CD4-positive, alpha-beta memory T cell (primary cell): ENCODE measurements at regions of chr4 and their contacts with region 1.

Region 1: GRCh38 chr4:75514131-75514948 is at the starts of genes RCHY1 and THAP6:
- DNase-seq: peak; percentile 92 to 96 (median 94)
- H3K4me3 ChIP-seq: peak within 1 kb of the TSS; percentile 68 to 99
- H3K4me3 Mint-ChIP-seq: no peak within 1 kb of the TSS
- H3K27ac ChIP-seq: peak within 1 kb of the TSS; percentile 97
- H3K27ac Mint-ChIP-seq: peak within 1 kb of the TSS in 3 of 7 donors; percentile 99 to 100 (median 100)
- H3K4me1 ChIP-seq: peaks cover 74% of the 10 kb centered on the region
- H3K4me1 Mint-ChIP-seq: peaks cover 35 to 51% (median 38%) of the 10 kb centered on the region in 4 donors
- H3K27me3 ChIP-seq: no peaks in the 10 kb centered on the region
- H3K27me3 Mint-ChIP-seq: no peaks in the 10 kb centered on the region
- total RNA-seq, gene RCHY1: 36.6 to 40.9 TPM
- total RNA-seq, gene THAP6: 38.1 to 43.4 TPM

Region 2: GRCh38 chr4:75630174-75630936 is 116.0 kb after region 1 on chr4 and contains the start of gene CDKL2:
- CTCF ChIA-PET with region 1: no interaction called
- POLR2A ChIA-PET with region 1: interaction called, 3 read pairs
- intact Hi-C with region 1: loop called (anchors 10 kb)
- DNase-seq: peak; percentile 91 to 93 (median 92)
- H3K4me3 ChIP-seq: peak within 1 kb of the TSS; percentile 33 to 66
- H3K4me3 Mint-ChIP-seq: peak within 1 kb of the TSS; percentile 88 to 95 (median 92)
- H3K27ac ChIP-seq: peak within 1 kb of the TSS; percentile 29
- H3K27ac Mint-ChIP-seq: peak within 1 kb of the TSS; percentile 26 to 93 (median 89)
- H3K4me1 ChIP-seq: peaks cover 6% of the 10 kb centered on the region
- H3K4me1 Mint-ChIP-seq: peaks cover 4 to 23% (median 11%) of the 10 kb centered on the region in 4 donors
- H3K27me3 ChIP-seq: no peaks in the 10 kb centered on the region
- H3K27me3 Mint-ChIP-seq: no peaks in the 10 kb centered on the region
- total RNA-seq, gene CDKL2: 0.35 to 0.39 TPM

Region 3: DNA sequence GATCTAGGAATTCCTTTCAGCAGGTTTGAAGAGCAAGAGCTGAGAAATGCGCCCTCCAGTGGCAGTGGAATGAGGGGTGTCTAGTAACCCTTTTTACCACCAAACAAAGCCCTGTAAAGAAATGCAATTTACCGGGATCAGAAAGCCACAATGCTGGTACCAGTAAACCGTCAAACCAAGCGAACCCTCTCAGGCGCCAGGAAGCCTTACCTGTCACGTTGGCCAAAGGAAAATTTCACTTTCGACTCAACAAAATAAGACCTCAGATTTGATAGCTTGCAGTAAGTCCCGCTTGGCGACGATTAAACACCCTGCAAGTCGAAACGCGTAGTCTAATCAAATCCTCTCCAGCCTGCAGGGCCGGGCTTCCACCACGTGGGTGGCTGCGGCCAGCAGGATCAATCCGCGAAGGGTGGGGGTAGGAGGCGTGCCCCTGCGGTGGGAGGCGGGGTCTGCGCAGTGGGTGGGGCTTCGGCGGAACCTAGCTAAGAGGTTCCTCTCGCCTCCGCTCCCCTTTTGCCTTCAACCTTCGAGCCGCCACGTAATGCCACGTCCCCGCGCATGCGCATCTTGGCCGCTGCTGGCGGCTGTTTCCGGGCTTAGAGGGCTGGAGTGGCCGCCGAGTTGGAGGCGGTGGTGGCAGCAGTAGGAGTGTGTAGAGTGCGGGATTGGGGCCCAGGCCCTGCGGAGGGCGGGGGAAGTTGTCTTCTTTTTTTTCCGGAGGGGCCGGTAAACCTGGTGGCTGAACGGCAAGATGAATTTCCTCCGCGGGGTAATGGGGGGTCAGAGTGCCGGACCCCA is 209.9 kb after region 1 on chr4 and contains the start of gene USO1:
- CTCF ChIA-PET with region 1: interaction called, 13 read pairs
- POLR2A ChIA-PET with region 1: interaction called, 41 read pairs
- intact Hi-C with region 1: loop called (anchors 1 kb)
- DNase-seq: peak; percentile 99
- H3K4me3 ChIP-seq: peak within 1 kb of the TSS; percentile 91 to 93
- H3K4me3 Mint-ChIP-seq: peak within 1 kb of the TSS; percentile 97 to 100 (median 100)
- H3K27ac ChIP-seq: peak within 1 kb of the TSS; percentile 86
- H3K27ac Mint-ChIP-seq: peak within 1 kb of the TSS; percentile 98 to 100 (median 99)
- H3K4me1 ChIP-seq: peaks cover 52% of the 10 kb centered on the region
- H3K4me1 Mint-ChIP-seq: peaks cover 33 to 64% (median 49%) of the 10 kb centered on the region in 4 donors
- H3K27me3 ChIP-seq: no peaks in the 10 kb centered on the region
- H3K27me3 Mint-ChIP-seq: no peaks in the 10 kb centered on the region
- total RNA-seq, gene USO1: 48.6 to 49.4 TPM

Region 4: DNA sequence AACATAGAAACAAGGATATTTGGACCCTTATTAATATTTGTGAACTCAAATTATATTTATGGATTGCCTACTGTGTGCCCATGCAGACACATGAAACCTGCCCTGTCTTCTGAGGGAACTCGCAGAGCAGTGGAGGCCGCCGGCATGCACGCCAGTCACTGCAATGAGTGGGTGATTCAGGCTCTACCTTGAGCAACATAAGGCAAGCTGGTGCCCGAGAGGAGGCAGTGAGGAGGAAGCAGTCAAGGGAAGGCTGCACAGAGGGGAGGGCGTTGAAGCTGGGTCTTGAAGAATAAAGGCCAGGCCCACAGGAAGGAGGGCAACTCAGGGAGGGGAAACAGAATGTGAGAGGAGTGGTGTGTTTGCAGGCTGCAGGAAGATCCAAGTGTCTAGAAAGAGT is 335.1 kb after region 1 on chr4:
- CTCF ChIA-PET with region 1: no interaction called
- POLR2A ChIA-PET with region 1: no interaction called
- intact Hi-C with region 1: no loop called
- DNase-seq: no peak
- H3K4me3 ChIP-seq: no peak overlapping the region
- H3K4me3 Mint-ChIP-seq: peak overlapping the region in 1 of 8 donors; percentile 27
- H3K27ac ChIP-seq: no peak overlapping the region
- H3K27ac Mint-ChIP-seq: peak overlapping the region in 1 of 7 donors; percentile 8
- H3K4me1 ChIP-seq: no peaks in the 10 kb centered on the region
- H3K4me1 Mint-ChIP-seq: peaks cover 0 to 2% (median under 1%) of the 10 kb centered on the region in 4 donors
- H3K27me3 ChIP-seq: no peaks in the 10 kb centered on the region
- H3K27me3 Mint-ChIP-seq: peaks cover 0 to 10% of the 10 kb centered on the region in 2 donors

Region 5: GRCh38 chr4:75989846-75990528 is 475.6 kb after region 1 on chr4:
- CTCF ChIA-PET with region 1: no interaction called
- POLR2A ChIA-PET with region 1: no interaction called
- intact Hi-C with region 1: loop called (anchors 2 kb)
- DNase-seq: peak in 4 of 5 donors; percentile 3 to 14 (median 8)
- H3K4me3 ChIP-seq: peak overlapping the region; percentile 84 to 93
- H3K4me3 Mint-ChIP-seq: peak overlapping the region; percentile 95 to 98 (median 96)
- H3K27ac ChIP-seq: peak overlapping the region; percentile 70
- H3K27ac Mint-ChIP-seq: peak overlapping the region; percentile 92 to 97 (median 95)
- H3K4me1 ChIP-seq: peaks cover 53% of the 10 kb centered on the region
- H3K4me1 Mint-ChIP-seq: peaks cover 0 to 34% (median 20%) of the 10 kb centered on the region in 4 donors
- H3K27me3 ChIP-seq: no peaks in the 10 kb centered on the region
- H3K27me3 Mint-ChIP-seq: peaks cover 0 to 5% of the 10 kb centered on the region in 2 donors

Region 6: DNA sequence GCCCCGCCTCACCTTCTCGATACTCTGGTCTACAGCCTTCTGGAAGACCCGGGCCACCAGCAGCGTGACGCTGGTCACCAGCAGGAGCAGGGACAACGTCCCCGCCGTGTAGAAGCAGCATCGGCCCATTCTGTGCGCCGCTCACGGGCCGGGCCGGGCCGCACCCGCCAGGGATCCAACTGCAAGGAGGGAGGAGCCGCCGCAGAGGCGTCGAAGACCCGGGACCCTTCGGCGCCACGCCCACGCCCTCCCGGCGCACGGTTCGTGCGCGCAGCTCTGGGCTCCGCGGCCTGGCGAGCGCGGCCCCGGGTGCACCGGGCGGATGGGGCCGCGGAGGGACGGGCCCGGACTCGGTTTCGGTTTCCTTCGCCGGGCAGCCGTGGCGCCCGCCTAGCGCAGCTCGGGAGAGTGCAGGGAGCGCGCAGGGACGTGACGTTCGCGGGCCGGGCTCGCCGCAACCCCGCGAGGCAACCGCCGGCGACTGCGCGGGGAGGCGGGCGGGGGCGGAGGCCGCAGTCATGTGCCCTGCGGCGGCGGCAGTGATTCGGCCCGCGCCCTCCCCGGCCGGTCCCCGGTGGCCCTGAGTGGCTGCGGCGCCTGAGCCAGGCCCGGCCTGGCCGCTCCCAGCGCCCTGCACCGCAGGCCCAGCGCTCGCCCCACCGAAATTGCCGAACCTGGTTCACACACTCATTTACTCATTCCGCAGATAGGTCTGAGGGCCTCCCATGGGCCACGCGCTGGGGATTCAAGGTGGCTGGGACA is 699.3 kb after region 1 on chr4 and contains the start of gene SCARB2:
- CTCF ChIA-PET with region 1: no interaction called
- POLR2A ChIA-PET with region 1: no interaction called
- intact Hi-C with region 1: loop called (anchors 5 kb)
- DNase-seq: peak; percentile 79 to 88 (median 83)
- H3K4me3 ChIP-seq: peak within 1 kb of the TSS; percentile 77 to 90
- H3K4me3 Mint-ChIP-seq: peak within 1 kb of the TSS; percentile 89 to 97 (median 96)
- H3K27ac ChIP-seq: peak within 1 kb of the TSS; percentile 84
- H3K27ac Mint-ChIP-seq: peak within 1 kb of the TSS; percentile 92 to 98 (median 98)
- H3K4me1 ChIP-seq: peaks cover 43% of the 10 kb centered on the region
- H3K4me1 Mint-ChIP-seq: peaks cover 39 to 72% (median 48%) of the 10 kb centered on the region in 4 donors
- H3K27me3 ChIP-seq: no peaks in the 10 kb centered on the region
- H3K27me3 Mint-ChIP-seq: no peaks in the 10 kb centered on the region
- total RNA-seq, gene SCARB2: 23.3 to 23.5 TPM